ENCODE measurements at regions of chr2 and their contacts with region 1.

Region 1: GRCh38 chr2:68925295-68925896 is 27.3 kb downstream of the GKN2 start:
- DNase-seq: peak in 1 of 2 donors; percentile 35
- ATAC-seq: peak in 6 of 8 donors; percentile 51 to 70 (median 59)
- H3K4me3 ChIP-seq: no peak overlapping the region
- H3K27ac ChIP-seq: no peak overlapping the region
- H3K4me1 ChIP-seq: peaks cover 0 to 4% (median 0%) of the 10 kb centered on the region in 9 donors
- H3K27me3 ChIP-seq: peaks cover 0 to 22% (median 0%) of the 10 kb centered on the region in 7 donors
- CTCF ChIP-seq: peak; percentile 64 to 89 (median 82)

Region 2: GRCh38 chr2:68467077-68467960 is 458.1 kb before region 1 on chr2 and contains the starts of genes APLF and FBXO48:
- intact Hi-C with region 1: loop called in 8 of 10 experiments (anchors 5 to 10 kb)
- DNase-seq: peak; percentile 94 to 99
- ATAC-seq: peak; percentile 97 to 99 (median 99)
- H3K4me3 ChIP-seq: peak within 1 kb of the TSS; percentile 66 to 95 (median 78)
- H3K27ac ChIP-seq: peak within 1 kb of the TSS; percentile 2 to 94 (median 84)
- H3K4me1 ChIP-seq: peaks cover 0 to 34% (median 17%) of the 10 kb centered on the region in 9 donors
- H3K27me3 ChIP-seq: no peaks in the 10 kb centered on the region
- CTCF ChIP-seq: no peak
- total RNA-seq, gene APLF: 3.4 to 6.5 (median 5.1) TPM
- total RNA-seq, gene FBXO48: 0.27 to 1.2 (median 0.97) TPM

Region 3: DNA sequence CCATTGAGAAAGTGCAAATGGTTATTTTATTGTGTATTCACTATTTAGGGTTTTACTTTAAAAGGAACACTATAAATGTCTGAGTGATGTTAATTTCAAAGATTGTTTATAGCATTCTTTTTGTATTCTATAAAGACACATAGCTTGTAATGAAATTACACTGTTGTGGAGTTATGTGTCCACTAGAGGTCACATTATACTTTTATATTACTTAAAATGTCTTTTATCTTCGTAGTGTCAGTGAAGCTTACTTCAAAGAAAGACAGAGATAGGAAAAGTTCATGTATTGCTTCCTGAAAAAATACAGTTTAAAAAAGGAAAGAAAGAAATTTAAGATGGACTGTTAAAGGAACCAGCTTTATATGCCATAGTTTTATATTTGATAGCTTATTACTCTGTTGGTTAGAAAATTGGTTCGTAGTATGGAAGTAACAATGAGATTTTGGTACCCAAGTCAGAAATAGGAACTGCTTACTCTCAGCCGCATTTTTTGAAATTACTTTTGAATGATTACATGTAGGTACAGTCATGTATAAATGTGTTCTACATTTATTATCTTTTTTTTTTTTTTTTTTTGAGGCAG is 437.5 kb before region 1 on chr2:
- intact Hi-C with region 1: loop called in 4 of 10 experiments (anchors 5 to 10 kb)
- DNase-seq: no peak
- ATAC-seq: no peak
- H3K4me3 ChIP-seq: no peak overlapping the region
- H3K27ac ChIP-seq: no peak overlapping the region
- H3K4me1 ChIP-seq: peaks cover 0 to 6% (median 0%) of the 10 kb centered on the region in 9 donors
- H3K27me3 ChIP-seq: no peaks in the 10 kb centered on the region
- CTCF ChIP-seq: peak; percentile 7 to 70 (median 55)

Region 4: DNA sequence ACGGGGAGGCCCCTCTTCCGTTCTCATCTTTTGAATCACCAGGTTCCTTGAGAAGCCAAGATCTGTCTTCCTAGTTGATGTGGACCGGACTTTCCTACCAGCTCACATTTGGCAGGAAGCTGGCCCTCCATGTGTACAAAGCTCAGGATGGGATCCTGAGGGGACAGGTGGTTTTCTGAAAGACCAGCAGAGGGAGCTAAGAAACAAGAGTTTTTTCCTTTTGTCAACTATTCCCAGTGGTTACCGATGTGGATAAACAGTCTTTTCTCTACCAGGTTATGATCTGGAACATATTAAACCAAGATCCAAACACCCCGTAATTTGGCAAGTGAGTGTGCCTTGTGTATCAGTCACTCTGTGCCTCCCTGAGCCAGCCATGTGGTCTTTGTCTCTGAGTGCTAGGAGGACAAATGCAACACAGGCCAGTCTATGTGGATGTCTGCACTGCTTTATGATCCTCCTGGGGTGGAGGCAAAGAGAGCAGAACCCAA is 215.9 kb before region 1 on chr2:
- intact Hi-C with region 1: loop called in 8 of 10 experiments (anchors 1 to 10 kb)
- DNase-seq: no peak
- ATAC-seq: peak in 7 of 8 donors; percentile 61 to 77 (median 63)
- H3K4me3 ChIP-seq: no peak overlapping the region
- H3K27ac ChIP-seq: no peak overlapping the region
- H3K4me1 ChIP-seq: peaks cover 0 to 9% (median 0%) of the 10 kb centered on the region in 9 donors
- H3K27me3 ChIP-seq: peaks cover 0 to 3% (median 0%) of the 10 kb centered on the region in 7 donors
- CTCF ChIP-seq: peak; percentile 33 to 87 (median 75)

Region 5: DNA sequence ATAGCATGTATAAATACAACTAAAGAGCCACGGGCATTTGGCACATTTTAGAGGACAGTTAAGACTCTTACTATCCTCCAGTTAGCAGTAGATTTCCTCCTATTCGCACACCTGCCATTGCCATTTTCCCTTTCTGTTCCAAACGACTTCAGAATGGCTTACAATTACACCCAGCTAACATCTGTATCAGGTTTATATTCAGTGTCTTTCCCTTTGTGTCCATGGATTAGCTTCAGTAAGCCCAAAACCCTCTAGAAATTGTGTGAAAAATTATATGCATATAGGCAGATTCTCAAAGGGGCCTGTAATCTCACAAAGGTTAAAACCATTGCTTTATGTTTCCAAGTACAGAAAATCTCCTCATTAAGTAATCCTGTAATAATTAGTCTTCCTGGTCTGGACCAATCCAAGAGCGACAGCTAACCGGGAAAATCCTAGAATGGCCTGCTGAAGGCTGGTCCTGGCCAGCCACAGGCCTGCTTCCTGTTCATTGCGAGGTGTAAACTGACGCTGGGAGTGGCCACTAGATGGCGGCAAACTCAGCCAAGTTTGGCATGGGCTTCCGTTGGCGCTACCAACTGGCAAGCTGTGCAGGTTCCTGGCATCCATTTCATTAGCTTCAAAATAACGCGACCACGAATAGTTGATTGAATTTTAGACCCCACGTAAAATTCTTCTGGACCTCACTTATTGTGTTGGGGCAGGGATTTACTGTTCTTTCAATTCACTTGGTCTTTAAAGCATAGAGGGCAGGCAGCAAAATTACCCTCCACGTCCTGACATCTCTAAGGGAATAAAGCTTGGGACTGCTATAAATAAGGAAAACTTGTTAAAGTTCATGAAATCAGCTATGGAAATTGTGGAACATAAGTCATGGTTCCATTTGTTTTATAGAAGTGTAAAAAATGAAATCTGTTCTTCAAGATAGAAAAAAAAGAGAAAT is 173.7 kb before region 1 on chr2:
- intact Hi-C with region 1: loop called in 2 of 10 experiments (anchors 5 kb)
- DNase-seq: peak; percentile 88 to 92
- ATAC-seq: peak; percentile 92 to 97 (median 94)
- H3K4me3 ChIP-seq: peak overlapping the region in 3 of 10 donors; percentile 23 to 32 (median 30)
- H3K27ac ChIP-seq: peak overlapping the region in 4 of 10 donors; percentile 0 to 45 (median 16)
- H3K4me1 ChIP-seq: peaks cover 0 to 80% (median 25%) of the 10 kb centered on the region in 9 donors
- H3K27me3 ChIP-seq: no peaks in the 10 kb centered on the region
- CTCF ChIP-seq: peak; percentile 82 to 98 (median 94)

Region 6: GRCh38 chr2:69163109-69163508 is 237.7 kb after region 1 on chr2:
- intact Hi-C with region 1: no loop called
- DNase-seq: no peak
- ATAC-seq: peak in 7 of 8 donors; percentile 46 to 80 (median 68)
- H3K4me3 ChIP-seq: no peak overlapping the region
- H3K27ac ChIP-seq: peak overlapping the region in 4 of 10 donors; percentile 9 to 74 (median 44)
- H3K4me1 ChIP-seq: peaks cover 7 to 70% (median 50%) of the 10 kb centered on the region in 9 donors
- H3K27me3 ChIP-seq: no peaks in the 10 kb centered on the region
- CTCF ChIP-seq: no peak

Measured in heart right ventricle (tissue), 16 donors.